ENCODE measurements at regions of chr4 and their contacts with region 1.

Region 1: DNA sequence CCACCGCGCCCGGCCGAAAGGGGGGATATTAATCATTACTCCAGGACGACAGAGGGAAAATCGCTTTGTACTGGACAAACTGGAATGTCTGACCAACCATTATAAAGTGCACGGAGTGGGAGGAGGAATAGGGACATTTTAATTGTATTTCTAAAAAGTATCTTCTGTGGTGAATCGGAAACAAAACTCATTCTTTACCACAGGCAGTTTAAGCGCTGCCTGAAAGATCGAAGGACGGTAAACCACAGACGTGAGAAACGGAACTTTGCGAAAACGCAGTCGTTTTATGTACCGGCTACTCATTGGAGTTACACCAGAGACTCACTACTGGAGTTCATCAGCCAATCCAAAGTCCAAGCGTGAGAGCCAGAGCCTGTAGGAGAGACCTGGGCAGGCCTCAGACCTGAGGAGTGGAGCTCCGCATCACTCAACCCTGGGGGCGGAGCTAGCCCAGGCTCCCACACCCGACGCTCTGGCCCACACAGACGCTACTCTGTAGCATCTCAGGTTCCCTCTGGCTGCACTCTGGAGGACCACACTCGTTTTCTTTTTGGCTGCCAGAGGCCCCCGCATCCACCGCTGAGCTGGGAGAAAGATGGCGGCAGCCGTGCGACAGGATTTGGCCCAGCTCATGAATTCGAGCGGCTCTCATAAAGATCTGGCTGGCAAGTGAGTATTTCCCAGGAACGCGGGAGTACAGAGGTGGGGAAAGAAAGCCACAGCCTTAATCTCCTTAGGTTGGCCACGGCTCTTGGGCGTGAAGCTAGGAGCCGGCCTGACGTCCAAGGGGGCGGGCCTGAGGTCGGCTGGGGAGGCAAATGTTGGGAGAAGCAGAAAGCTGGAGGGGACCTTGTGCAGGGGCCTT is at the start of gene COPS4:
- DNase-seq: peak; percentile 98
- H3K4me3 ChIP-seq: peak within 1 kb of the TSS; percentile 77
- H3K27ac ChIP-seq: peak within 1 kb of the TSS; percentile 87
- H3K4me1 ChIP-seq: no peaks in the 10 kb centered on the region
- H3K27me3 ChIP-seq: no peaks in the 10 kb centered on the region
- CTCF ChIP-seq: no peak
- total RNA-seq, gene COPS4: 25.5 and 27.2 TPM in 2 replicates

Region 2: DNA sequence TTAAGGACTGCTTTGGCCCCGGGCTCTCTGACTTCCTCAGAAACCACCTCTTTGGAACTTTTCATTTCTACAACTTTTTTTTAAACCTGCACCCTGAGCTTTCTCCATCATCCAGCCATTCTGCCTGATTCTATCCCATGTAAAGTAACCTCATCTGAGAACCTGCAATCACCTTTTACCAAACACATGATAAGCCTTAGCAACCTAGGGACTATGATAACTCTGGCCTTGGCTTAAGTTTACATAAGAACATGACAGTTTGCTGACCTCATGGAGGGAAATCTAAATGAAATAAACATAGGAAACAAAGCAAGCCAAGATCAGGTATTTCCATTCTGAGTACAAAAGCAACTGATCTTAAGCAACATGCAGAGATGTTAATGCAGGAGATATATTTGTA is 457.4 kb before region 1 on chr4:
- CTCF ChIA-PET with region 1: no interaction called
- POLR2A ChIA-PET with region 1: no interaction called
- intact Hi-C with region 1: no loop called
- DNase-seq: no peak
- H3K4me3 ChIP-seq: no peak overlapping the region
- H3K27ac ChIP-seq: no peak overlapping the region
- H3K4me1 ChIP-seq: no peaks in the 10 kb centered on the region
- H3K27me3 ChIP-seq: no peaks in the 10 kb centered on the region
- CTCF ChIP-seq: no peak

Region 3: DNA sequence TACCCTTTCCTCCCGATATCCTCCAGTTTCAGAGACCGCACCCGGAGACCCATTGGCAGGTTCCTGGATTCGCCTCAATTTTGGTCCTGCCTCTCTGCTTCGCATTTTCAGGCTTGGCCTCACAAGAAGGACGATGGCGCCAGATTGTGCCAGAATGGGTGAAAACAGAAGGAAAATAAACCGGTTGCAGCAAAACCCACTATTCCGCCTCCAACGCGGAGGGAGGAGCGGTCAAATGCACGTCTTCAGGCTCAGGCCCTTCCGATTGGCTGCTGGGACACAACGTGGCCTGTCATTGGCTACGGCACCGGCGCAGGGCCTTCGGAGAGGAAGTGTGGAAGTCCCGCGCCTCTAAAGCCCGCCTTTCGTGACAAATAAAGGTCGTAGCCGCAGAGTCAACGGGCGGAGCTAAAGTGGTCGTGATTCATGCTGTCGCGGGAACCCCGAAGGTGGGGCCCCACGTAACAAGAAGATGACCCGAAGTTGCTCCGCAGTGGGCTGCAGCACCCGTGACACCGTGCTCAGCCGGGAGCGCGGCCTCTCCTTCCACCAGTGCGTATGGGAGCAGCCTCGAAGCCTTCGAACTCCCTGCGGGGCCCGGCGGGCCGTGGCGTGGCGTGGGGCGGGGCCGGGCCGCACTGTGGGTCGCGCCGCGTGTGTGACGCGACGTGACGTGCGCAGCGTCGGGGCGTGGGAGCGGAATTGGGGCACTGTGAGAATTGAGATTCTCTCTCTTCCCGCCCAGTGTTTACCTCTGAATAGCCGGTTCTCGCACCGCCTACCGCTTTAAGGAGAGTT is 134.3 kb before region 1 on chr4 and contains the start of gene THAP9:
- CTCF ChIA-PET with region 1: no interaction called
- POLR2A ChIA-PET with region 1: interaction called, 14 read pairs
- intact Hi-C with region 1: no loop called
- DNase-seq: peak; percentile 97
- H3K4me3 ChIP-seq: peak within 1 kb of the TSS; percentile 76
- H3K27ac ChIP-seq: peak within 1 kb of the TSS; percentile 98
- H3K4me1 ChIP-seq: no peaks in the 10 kb centered on the region
- H3K27me3 ChIP-seq: no peaks in the 10 kb centered on the region
- CTCF ChIP-seq: no peak
- total RNA-seq, gene THAP9: 3.8 and 4.2 TPM in 2 replicates